ENCODE measurements at regions of chr12 and their contacts with region 1.

Region 1: DNA sequence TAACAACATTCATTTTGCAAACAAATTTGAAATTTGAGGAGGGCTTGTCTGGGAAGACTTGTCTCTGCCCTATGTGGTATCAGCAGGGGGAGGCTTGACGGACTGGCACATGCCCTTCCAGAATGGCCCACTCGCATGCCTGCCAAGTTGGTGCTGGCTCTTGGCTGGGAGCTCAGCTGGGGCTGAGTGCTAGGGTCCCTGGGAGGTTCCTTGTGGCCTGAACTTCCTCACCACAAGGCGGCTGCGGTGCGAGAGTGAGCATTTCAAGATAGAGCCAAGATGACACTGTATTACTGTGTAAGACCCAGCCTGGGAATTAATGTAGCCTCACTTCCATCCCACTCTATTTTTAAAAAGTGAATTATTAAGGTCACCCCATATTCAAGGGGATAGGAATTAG is 271.6 kb upstream of the PLEKHG7 start:
- DNase-seq: no peak
- ATAC-seq: peak; percentile 64
- H3K4me3 ChIP-seq: no peak overlapping the region
- H3K27ac ChIP-seq: peak overlapping the region; percentile 10
- H3K4me1 ChIP-seq: peaks cover 46% of the 10 kb centered on the region
- H3K27me3 ChIP-seq: no peaks in the 10 kb centered on the region
- CTCF ChIP-seq: peak; percentile 6 to 42 (median 40); a peak in 3 of 6 replicates
- EP300 ChIP-seq: no peak
- POLR2A ChIP-seq: no peak
- RAD21 ChIP-seq: peak; percentile 61

Region 2: DNA sequence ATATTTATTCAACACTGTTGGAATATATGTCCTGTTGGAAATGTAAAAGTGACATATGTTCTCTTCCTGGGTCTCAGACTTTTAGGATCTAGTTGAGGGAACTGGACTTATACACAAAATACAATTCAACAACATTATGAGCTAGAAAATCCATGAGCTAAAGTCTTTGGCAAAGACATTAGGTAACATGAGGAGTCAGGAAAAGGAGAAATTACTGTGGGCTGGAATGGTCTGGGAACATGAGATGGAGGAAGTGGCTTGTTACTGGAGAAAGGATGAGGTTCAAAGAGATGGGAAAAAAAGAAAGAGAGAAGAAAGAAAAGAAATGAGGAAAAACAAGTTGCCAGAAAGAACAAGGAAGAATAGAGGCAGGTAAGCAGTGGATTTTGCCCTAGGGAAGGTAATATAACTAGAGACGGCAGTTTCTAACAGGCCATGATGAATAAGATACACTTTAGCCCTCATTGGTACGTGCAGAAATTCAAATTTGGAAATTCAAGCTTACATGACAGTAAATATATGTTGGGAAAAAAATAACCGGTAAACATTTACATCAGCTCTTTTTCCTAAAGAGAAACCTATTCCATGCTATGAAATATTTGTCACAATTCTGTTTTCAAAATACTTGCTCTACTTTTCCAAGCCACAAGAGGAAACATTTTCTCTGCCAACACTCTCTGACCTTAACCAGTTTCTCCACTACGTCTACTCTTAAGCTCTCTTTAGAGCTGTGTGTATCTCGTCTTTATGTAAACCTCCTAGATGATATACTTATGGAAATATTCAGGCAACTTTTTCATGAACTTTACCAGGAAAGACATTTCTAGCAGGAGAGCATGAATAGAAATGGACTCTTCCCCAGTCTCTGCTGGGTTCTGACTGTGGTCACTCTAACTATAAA is 16.7 kb before region 1 on chr12:
- CTCF ChIA-PET with region 1: interaction called, 53 read pairs
- POLR2A ChIA-PET with region 1: interaction called, 6 read pairs
- RAD21 ChIA-PET with region 1: interaction called, 37 read pairs
- SMC1A ChIA-PET with region 1: interaction called, 145 read pairs
- in situ Hi-C with region 1: no loop called
- intact Hi-C with region 1: loop called (anchors 2 kb)
- DNase-seq: no peak
- ATAC-seq: no peak
- H3K4me3 ChIP-seq: no peak overlapping the region
- H3K27ac ChIP-seq: no peak overlapping the region
- H3K4me1 ChIP-seq: peaks cover 8% of the 10 kb centered on the region
- H3K27me3 ChIP-seq: no peaks in the 10 kb centered on the region
- CTCF ChIP-seq: no peak
- EP300 ChIP-seq: no peak
- POLR2A ChIP-seq: no peak
- RAD21 ChIP-seq: no peak

Region 3: GRCh38 chr12:92928962-92929915 is 498.1 kb after region 1 on chr12 and contains the start of gene EEA1:
- CTCF ChIA-PET with region 1: no interaction called
- POLR2A ChIA-PET with region 1: no interaction called
- RAD21 ChIA-PET with region 1: no interaction called
- SMC1A ChIA-PET with region 1: no interaction called
- in situ Hi-C with region 1: no loop called
- intact Hi-C with region 1: no loop called
- DNase-seq: peak; percentile 84
- ATAC-seq: peak; percentile 87
- H3K4me3 ChIP-seq: peak within 1 kb of the TSS; percentile 79
- H3K27ac ChIP-seq: peak within 1 kb of the TSS; percentile 98
- H3K4me1 ChIP-seq: peaks cover 4% of the 10 kb centered on the region
- H3K27me3 ChIP-seq: no peaks in the 10 kb centered on the region
- CTCF ChIP-seq: peak in 2 of 3 experiments; percentile 29 to 31; a peak in 3 of 6 replicates
- EP300 ChIP-seq: peak; percentile 30 to 35; a peak in 2 of 4 replicates
- POLR2A ChIP-seq: peak; percentile 96
- RAD21 ChIP-seq: peak; percentile 16; the same call in 1 of the 2 replicates
- polyA plus RNA-seq, gene EEA1: 5.5 to 9.5 TPM